ENCODE measurements at regions of chr12 and their contacts with region 1.

Region 1: GRCh38 chr12:27573972-27574371 is 50.0 kb downstream of the PPFIBP1 start:
- DNase-seq: peak; percentile 97
- ATAC-seq: peak; percentile 72
- H3K4me3 ChIP-seq: no peak overlapping the region
- H3K27ac ChIP-seq: 0 out of 2 replicates have a peak overlapping the region, but pooled peaks have one; percentile 25
- H3K4me1 ChIP-seq: peaks cover 17% of the 10 kb centered on the region
- H3K27me3 ChIP-seq: no peaks in the 10 kb centered on the region
- CTCF ChIP-seq: no peak
- POLR2A ChIP-seq: no peak
- RAD21 ChIP-seq: no peak

Region 2: GRCh38 chr12:27497446-27497845 is 76.5 kb before region 1 on chr12:
- CTCF ChIA-PET with region 1: no interaction called
- POLR2A ChIA-PET with region 1: no interaction called
- dilution Hi-C with region 1: no loop called
- in situ Hi-C with region 1: no loop called
- intact Hi-C with region 1: loop called (anchors 2 kb)
- DNase-seq: no peak
- ATAC-seq: no peak
- H3K4me3 ChIP-seq: no peak overlapping the region
- H3K27ac ChIP-seq: no peak overlapping the region
- H3K4me1 ChIP-seq: no peaks in the 10 kb centered on the region
- H3K27me3 ChIP-seq: no peaks in the 10 kb centered on the region
- CTCF ChIP-seq: no peak
- POLR2A ChIP-seq: no peak
- RAD21 ChIP-seq: no peak

Region 3: DNA sequence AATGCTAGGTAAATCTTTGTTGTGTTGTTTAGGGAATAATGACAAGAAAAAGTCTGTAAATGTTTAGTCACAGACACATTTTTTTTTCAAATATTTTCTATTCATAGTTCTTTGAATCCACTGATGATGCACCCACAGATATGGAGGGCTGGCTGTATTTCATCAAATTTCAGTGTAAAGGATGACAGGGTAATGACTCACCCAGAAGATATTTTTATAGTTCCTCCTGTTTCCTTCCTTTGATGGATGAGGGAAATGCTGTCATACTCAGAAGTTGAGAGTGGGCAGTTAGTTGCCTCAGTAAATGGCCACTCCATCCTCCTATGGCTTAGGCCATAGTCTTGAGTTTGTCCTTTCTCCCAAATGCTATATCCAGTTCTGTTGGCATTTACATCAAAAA is 45.3 kb after region 1 on chr12:
- CTCF ChIA-PET with region 1: no interaction called
- POLR2A ChIA-PET with region 1: no interaction called
- dilution Hi-C with region 1: no loop called
- in situ Hi-C with region 1: no loop called
- intact Hi-C with region 1: loop called (anchors 5 kb)
- DNase-seq: peak; percentile 90
- ATAC-seq: peak; percentile 61
- H3K4me3 ChIP-seq: no peak overlapping the region
- H3K27ac ChIP-seq: no peak overlapping the region
- H3K4me1 ChIP-seq: peaks cover 16% of the 10 kb centered on the region
- H3K27me3 ChIP-seq: no peaks in the 10 kb centered on the region
- CTCF ChIP-seq: no peak
- POLR2A ChIP-seq: no peak
- RAD21 ChIP-seq: no peak

Measured in IMR-90 (cell line).